Breast epithelium (tissue), 4 donors: ENCODE measurements at regions of chr14 and their contacts with region 1.

Region 1: DNA sequence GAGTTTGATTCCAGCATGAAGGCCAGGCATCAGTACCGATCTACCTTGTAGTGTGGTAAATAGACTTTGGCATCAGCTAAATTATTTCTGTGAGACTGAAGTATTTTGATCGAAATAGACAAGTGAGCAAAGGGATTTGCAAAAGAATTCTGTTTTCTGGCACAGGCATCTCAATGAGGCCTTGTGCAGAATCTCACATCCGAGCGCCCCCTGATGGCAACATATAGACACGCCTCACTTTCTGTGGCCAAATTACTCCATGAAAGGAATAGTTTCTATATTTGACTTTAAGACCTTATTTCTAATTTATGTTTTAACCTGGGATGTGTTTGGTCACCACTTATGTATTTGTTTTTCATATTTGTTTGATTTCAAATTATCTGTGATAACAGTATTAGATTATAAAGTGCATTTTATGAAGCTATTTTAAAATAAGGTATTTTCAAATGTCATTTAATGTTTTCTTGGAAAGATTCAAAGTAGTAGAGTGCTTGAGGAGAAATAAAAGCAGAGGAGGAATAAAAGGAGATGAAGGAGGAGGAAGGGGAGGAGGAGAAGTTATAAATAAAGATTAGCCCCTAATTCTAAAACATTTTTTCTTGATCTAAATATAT is 731.9 kb downstream of the NRXN3 start:
- DNase-seq: no peak
- H3K4me3 ChIP-seq: no peak overlapping the region
- H3K27ac ChIP-seq: no peak overlapping the region
- H3K4me1 ChIP-seq: no peaks in the 10 kb centered on the region
- H3K27me3 ChIP-seq: no peaks in the 10 kb centered on the region
- CTCF ChIP-seq: no peak
- POLR2A ChIP-seq: no peak

Region 2: GRCh38 chr14:78959674-78960264 is 57.7 kb after region 1 on chr14:
- intact Hi-C with region 1: loop called (anchors 2 kb)
- DNase-seq: peak; percentile 37 to 57
- H3K4me3 ChIP-seq: peak overlapping the region in 2 of 3 donors; percentile 8 to 16
- H3K27ac ChIP-seq: no peak overlapping the region
- H3K4me1 ChIP-seq: no peaks in the 10 kb centered on the region
- H3K27me3 ChIP-seq: no peaks in the 10 kb centered on the region
- CTCF ChIP-seq: peak; percentile 24 to 58 (median 52)
- POLR2A ChIP-seq: no peak